ENCODE measurements at regions of chr3 and their contacts with region 1.

Region 1: GRCh38 chr3:66418475-66418931 is 82.3 kb downstream of the LRIG1 start:
- DNase-seq: peak; percentile 91
- H3K4me3 ChIP-seq: no peak overlapping the region
- H3K27ac ChIP-seq: peak overlapping the region; percentile 62 to 75
- H3K4me1 ChIP-seq: peaks cover 36% of the 10 kb centered on the region
- H3K27me3 ChIP-seq: no peaks in the 10 kb centered on the region
- CTCF ChIP-seq: peak in 3 of 4 experiments; percentile 23 to 64 (median 62)
- POLR2A ChIP-seq: no peak

Region 2: DNA sequence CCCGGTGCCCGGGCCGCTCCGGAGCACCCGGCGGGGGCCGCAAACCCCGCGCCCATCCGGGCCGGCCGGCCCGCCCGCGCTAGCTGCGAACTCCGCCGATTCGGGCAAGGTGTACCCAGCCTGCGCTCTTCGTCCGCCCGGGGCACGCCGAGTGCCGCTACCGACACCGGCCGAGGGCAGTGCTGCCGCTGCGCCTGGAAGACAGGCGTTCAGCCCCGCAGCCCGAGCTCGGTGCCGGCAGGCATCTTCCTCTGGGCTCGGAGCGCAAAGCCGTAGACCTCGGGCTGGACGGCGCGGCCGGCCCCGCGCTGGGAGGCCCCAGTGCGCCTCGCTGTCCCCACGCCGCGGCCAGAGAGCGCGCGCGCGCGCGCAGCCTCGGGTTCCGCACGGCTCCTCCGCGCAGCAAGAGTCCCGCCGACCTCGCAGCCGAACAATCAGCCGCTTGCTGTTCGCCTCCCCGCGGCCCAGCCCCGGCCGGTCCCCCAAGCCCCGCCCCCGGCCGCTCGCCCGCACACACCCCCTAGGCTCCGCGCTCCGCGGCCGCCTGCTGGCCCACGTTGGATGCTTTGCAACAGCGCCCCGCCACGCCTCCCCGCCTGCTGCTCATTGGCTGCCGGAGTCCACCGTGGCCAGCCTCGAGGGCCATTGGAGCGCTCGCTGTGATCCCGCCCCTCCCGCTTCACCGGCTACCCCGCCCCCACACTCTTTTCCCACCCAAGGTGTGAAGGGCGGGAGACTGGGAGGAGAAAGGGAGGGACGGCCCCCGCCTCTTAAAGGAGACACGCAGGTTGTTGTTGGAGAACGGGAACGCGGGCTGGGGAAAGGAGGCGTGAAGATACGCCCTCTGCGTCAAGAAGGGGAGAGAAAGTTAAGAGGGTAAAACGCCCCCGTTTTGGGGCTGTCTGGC is 82.3 kb after region 1 on chr3 and contains the start of gene LRIG1:
- intact Hi-C with region 1: loop called (anchors 2 kb)
- DNase-seq: peak; percentile 100
- H3K4me3 ChIP-seq: peak within 1 kb of the TSS; percentile 98 to 99
- H3K27ac ChIP-seq: peak within 1 kb of the TSS; percentile 92 to 97
- H3K4me1 ChIP-seq: peaks cover under 1% of the 10 kb centered on the region
- H3K27me3 ChIP-seq: no peaks in the 10 kb centered on the region
- CTCF ChIP-seq: peak; percentile 33 to 63 (median 50)
- POLR2A ChIP-seq: peak; percentile 86
- total RNA-seq, gene LRIG1: 119 to 186 TPM

Measured in prostate gland (tissue), 2 donors.